Activated CD4-positive, alpha-beta T cell treated with anti-CD3 and anti-CD28 coated beads for 36 hours (primary cell): ENCODE measurements at regions of chr6 and their contacts with region 1.

Region 1: DNA sequence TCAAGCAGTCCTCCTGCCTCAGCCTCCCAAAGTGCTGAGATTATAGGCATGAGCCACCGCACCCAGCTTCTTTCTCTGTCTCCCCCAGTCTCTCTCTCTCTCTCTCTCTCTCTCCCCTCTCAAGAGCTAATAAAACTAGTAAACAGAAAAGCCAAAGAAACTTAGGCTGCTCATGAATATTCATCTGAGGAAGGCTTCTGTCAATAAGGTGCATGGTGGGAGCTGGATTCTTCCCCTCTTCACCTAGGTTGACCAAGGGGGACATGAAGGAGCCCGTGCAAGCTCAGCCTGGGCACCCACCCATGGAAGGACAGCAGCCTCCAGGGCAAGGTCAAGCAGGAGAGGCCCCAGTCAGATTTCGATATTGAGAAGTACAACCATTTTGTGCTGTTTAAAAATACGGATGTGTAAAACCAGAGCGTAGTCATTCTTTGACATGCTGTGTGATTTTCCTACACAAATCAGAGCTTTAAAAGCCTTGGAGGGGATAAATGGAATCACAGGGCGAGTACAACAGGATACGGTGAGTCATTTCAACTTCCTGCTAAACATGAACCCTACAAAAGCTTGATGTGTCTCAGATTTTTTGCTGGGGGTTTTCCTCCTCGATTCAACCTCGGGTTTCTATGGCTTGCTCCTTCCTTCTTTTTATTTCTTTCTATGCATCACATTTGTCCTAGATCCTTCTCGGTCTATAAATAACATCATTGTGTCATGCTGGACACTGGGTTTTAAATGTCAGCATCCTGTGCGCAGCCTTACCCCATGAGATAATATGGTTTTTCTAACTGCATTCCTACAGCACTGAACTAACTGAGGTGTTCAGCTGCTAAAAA is 368.9 kb upstream of the JARID2 start:
- DNase-seq: peak; percentile 52
- ATAC-seq: peak; percentile 74
- H3K4me3 Mint-ChIP-seq: peak overlapping the region; percentile 47
- H3K27ac Mint-ChIP-seq: peak overlapping the region; percentile 99
- H3K4me1 Mint-ChIP-seq: peaks cover 78% of the 10 kb centered on the region
- H3K27me3 Mint-ChIP-seq: no peaks in the 10 kb centered on the region

Region 2: GRCh38 chr6:14452567-14453527 is 424.1 kb before region 1 on chr6:
- CTCF ChIA-PET with region 1: interaction called, 5 read pairs
- POLR2A ChIA-PET with region 1: no interaction called
- intact Hi-C with region 1: loop called (anchors 2 to 5 kb)
- DNase-seq: peak; percentile 85
- ATAC-seq: peak; percentile 70
- H3K4me3 Mint-ChIP-seq: peak overlapping the region; percentile 26
- H3K27ac Mint-ChIP-seq: peak overlapping the region; percentile 83
- H3K4me1 Mint-ChIP-seq: peaks cover 89% of the 10 kb centered on the region
- H3K27me3 Mint-ChIP-seq: no peaks in the 10 kb centered on the region

Region 3: DNA sequence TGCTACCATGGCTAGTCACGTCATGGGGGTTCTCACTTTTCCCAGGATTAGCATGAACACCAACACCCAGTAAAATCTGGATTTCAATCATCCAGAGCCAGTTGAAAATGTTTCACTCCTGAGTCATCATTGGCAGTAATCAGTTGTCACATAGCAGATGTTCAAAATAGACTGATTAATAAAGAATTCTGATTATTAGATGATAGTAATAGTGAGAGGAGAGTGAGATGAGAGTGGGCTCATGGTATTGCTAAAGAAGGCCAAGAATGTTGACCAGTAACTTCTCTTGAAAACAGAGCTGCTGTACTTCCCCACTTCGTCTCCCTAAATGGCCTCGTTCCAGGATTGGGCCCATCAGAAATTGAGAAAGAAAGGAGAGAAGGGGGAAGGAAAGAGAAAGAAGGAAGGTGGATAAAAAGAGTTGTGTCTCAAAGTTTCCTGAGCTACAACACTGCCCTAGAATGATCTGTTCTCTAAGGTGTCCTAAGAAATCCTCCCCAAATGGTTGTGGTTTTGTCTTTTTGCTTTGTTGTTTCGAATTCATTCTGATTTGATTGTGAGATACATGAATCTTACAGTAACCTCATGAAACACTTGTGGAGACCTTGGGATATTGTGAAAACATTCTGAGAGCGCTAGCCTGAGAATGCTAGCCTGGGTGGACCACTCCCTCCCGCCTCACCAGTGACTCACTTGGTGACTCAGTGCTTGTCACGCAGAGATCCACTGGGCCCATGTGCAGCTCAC is 133.4 kb before region 1 on chr6:
- CTCF ChIA-PET with region 1: interaction called, 4 read pairs
- POLR2A ChIA-PET with region 1: interaction called, 12 read pairs
- intact Hi-C with region 1: loop called in 1 of 2 experiments (anchors 1 kb)
- DNase-seq: peak; percentile 92
- ATAC-seq: peak; percentile 84
- H3K4me3 Mint-ChIP-seq: peak overlapping the region; percentile 65
- H3K27ac Mint-ChIP-seq: peak overlapping the region; percentile 100
- H3K4me1 Mint-ChIP-seq: peaks cover 92% of the 10 kb centered on the region
- H3K27me3 Mint-ChIP-seq: no peaks in the 10 kb centered on the region

Region 4: GRCh38 chr6:14857501-14857900 is 19.5 kb before region 1 on chr6:
- CTCF ChIA-PET with region 1: interaction called, 11 read pairs
- POLR2A ChIA-PET with region 1: interaction called, 13 read pairs
- intact Hi-C with region 1: loop called (anchors 1 kb)
- DNase-seq: peak; percentile 80
- ATAC-seq: peak; percentile 71
- H3K4me3 Mint-ChIP-seq: peak overlapping the region; percentile 7
- H3K27ac Mint-ChIP-seq: peak overlapping the region; percentile 95
- H3K4me1 Mint-ChIP-seq: peaks cover 48% of the 10 kb centered on the region
- H3K27me3 Mint-ChIP-seq: no peaks in the 10 kb centered on the region

Region 5: DNA sequence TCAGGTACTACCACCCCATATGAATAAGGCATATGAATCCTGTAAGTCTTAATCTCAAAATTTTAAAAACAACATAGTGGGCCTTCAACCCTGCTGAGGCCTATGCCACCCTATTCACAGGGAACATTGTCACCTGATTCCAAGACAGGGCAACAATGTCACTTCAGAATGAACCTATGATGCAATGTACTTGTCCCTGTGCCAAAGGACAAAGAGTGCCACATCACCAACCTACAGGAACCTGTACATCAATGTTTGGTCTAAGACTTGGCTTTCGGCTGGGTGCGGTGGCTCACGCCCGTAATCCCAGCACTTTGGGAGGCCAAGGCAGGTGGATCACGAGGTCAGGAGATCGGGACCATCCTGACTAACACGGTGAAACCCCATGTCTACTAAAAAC is 50.4 kb after region 1 on chr6:
- CTCF ChIA-PET with region 1: no interaction called
- POLR2A ChIA-PET with region 1: no interaction called
- intact Hi-C with region 1: no loop called
- DNase-seq: no peak
- ATAC-seq: no peak
- H3K4me3 Mint-ChIP-seq: no peak overlapping the region
- H3K27ac Mint-ChIP-seq: no peak overlapping the region
- H3K4me1 Mint-ChIP-seq: peaks cover 4% of the 10 kb centered on the region
- H3K27me3 Mint-ChIP-seq: no peaks in the 10 kb centered on the region

Region 6: DNA sequence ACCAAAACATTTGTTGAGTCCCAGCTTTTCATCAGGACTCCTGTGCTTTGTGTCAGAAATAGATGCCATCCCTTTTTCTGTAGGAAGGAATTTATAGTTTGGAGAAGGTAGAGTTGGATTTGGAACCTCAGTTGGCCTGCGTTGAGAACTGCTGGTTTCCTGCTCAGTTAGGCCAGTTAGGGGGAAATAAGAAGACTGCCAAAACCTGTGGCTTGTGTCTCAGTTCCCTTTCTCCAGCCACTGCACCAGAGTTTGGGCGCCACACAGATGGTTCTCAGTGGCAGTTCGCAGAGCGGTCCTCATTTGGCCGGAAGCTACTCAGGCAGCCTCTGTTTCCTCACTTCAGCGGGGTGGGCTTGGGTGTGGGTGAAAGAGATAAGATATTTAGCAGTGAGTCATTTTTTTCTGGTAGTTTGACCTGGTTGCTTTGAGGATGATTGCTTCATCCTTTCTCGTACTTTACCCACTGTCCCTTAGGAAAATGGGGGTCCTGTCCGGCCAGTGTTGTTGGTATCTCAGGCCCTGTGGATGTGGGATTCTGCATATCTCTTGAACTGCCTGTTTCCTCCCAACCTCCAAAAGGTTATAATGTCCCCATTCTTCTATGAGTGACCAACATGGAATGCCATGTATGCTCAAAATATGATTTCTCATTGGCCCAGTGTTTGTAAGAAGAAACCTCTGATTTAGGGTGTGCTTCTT is 422.6 kb after region 1 on chr6:
- CTCF ChIA-PET with region 1: no interaction called
- POLR2A ChIA-PET with region 1: no interaction called
- intact Hi-C with region 1: loop called (anchors 1 to 5 kb)
- DNase-seq: peak; percentile 48
- ATAC-seq: no peak
- H3K4me3 Mint-ChIP-seq: peak overlapping the region; percentile 18
- H3K27ac Mint-ChIP-seq: peak overlapping the region; percentile 69
- H3K4me1 Mint-ChIP-seq: peaks cover 83% of the 10 kb centered on the region
- H3K27me3 Mint-ChIP-seq: no peaks in the 10 kb centered on the region

Region 7: GRCh38 chr6:15621203-15622044 is 744.4 kb after region 1 on chr6:
- CTCF ChIA-PET with region 1: no interaction called
- POLR2A ChIA-PET with region 1: no interaction called
- intact Hi-C with region 1: no loop called
- DNase-seq: peak; percentile 45
- ATAC-seq: peak; percentile 93
- H3K4me3 Mint-ChIP-seq: no peak overlapping the region
- H3K27ac Mint-ChIP-seq: peak overlapping the region; percentile 6
- H3K4me1 Mint-ChIP-seq: peaks cover 32% of the 10 kb centered on the region
- H3K27me3 Mint-ChIP-seq: peaks cover 2% of the 10 kb centered on the region